Activated T-helper 2 cell treated with anti-CD3 and anti-CD28 coated beads, Interferon-gamma antibody, Interleukin-2, Interleukin-4, amounts not matched to agents 10 μg/mL and 5 μg/mL and 100 μg/mL, durations not matched to agents 14 hours and 24 hours and 36 hours (primary cell): ENCODE measurements at regions of chr6 and their contacts with region 1.

Region 1: GRCh38 chr6:7137335-7138045 is 29.7 kb downstream of the RREB1 start:
- DNase-seq: peak; percentile 66
- H3K4me3 Mint-ChIP-seq: peak overlapping the region; percentile 84
- H3K27ac Mint-ChIP-seq: peak overlapping the region; percentile 99
- H3K4me1 Mint-ChIP-seq: peaks cover 63% of the 10 kb centered on the region
- H3K27me3 Mint-ChIP-seq: no peaks in the 10 kb centered on the region

Region 2: GRCh38 chr6:6931071-6932025 is 206.1 kb before region 1 on chr6:
- intact Hi-C with region 1: no loop called
- DNase-seq: no peak
- H3K4me3 Mint-ChIP-seq: no peak overlapping the region
- H3K27ac Mint-ChIP-seq: no peak overlapping the region
- H3K4me1 Mint-ChIP-seq: no peaks in the 10 kb centered on the region
- H3K27me3 Mint-ChIP-seq: peaks cover 17% of the 10 kb centered on the region

Region 3: DNA sequence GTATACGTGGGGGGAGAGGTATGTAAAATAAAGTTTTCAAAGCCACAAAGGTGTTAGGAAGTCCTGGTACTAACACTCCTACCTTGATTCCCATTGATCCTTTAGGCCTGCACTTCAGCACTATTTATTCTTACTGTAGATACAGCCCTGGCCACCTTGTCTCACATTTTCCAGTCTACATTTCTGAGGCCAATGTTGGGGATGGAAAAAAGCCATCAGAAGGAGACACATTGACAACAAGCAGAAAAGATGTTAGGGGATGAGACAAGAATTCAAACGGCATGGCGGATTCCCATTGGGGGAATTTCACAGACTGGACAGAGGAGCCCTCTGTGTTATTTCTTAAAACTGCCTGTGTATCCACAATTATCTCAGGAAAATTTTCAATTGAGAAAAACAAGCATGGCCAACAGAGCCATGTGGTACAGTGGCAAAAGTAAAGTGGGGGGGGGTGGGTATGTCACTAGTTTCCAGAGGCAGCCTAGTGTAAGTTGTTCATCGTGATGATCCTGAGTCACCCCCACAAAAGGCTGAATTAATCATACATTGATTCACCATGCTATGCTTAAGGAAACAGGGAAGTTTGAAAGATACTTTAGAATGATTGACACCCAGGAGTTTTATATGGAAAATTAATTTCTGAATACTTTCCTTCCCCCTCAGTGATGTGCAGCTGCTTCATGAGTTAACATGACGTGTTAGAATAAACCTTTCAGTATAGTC is 10.8 kb after region 1 on chr6:
- intact Hi-C with region 1: loop called (anchors 1 kb)
- DNase-seq: no peak
- H3K4me3 Mint-ChIP-seq: no peak overlapping the region
- H3K27ac Mint-ChIP-seq: peak overlapping the region; percentile 59
- H3K4me1 Mint-ChIP-seq: peaks cover 65% of the 10 kb centered on the region
- H3K27me3 Mint-ChIP-seq: no peaks in the 10 kb centered on the region

Region 4: DNA sequence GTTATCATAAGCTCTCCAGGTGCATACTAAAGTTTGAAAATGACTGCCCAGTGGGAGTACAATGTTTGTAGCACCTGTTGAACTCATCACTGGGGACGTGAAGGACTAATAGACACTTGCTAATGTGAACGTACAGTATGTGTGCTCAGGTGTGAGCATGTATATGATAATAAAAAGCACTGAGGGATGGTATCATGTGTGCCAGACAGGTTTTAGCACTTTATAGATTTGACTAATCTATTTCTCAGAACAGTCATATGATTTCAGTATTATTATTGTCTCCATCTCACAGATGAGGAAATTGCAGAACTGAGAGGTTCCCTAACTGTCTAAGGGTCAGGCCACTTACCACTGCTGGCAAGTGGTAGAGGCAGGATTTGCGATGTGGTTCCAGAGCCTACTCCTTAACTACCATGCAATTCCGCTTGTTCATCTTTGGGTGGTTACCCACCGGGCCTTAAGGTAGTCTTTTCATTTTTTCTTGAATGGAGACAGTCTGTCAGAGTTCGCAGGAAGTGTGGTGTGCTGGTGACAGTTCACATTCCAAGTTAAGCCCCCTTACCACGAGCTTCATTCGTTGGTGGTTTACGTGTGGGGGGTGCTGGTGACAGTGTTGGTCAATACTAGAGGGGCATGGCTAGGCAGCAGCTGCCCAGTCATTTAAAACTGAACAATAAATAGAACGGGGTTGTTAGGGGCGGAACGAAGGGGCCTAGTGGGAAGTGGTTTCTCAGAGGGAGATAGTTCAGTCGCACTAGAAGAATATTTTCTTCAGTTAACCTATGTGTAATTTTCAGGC is 17.1 kb after region 1 on chr6:
- intact Hi-C with region 1: loop called (anchors 2 kb)
- DNase-seq: no peak
- H3K4me3 Mint-ChIP-seq: peak overlapping the region; percentile 22
- H3K27ac Mint-ChIP-seq: peak overlapping the region; percentile 65
- H3K4me1 Mint-ChIP-seq: peaks cover 61% of the 10 kb centered on the region
- H3K27me3 Mint-ChIP-seq: no peaks in the 10 kb centered on the region